GM12878 (cell line): ENCODE measurements at regions of chr3 and their contacts with region 1.

Region 1: DNA sequence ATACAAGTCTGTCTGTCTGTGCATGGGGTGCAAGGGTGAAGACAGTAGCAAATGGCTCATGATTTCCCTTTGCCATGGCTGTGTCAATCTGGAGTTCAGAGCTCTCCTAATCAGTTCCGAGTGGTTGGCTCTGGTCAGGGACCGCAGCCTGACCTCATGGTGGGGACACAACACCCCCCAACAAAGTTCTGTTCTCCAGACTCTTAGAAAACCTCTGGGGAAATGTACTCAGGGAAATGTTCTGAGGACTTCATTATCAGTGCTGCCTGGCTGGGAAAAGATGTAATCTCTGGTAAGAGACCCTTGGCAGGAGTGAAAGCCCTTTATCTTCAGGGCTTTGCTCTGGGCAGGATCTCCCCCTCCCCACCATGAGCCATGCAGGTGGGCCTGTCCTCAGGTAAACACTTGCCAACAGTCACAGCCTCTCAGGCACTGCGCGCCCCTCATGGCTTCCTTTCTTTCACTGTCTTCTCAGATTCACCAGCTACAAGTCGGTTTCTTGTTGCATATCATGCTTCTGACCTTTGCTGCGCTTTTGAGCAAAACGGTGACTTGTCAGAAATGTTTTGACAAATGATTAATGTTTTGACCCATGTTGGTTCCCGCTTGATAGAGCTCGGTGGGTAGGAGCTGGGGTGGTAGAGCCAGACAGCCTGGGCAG is 95.5 kb downstream of the ST6GAL1 start:
- DNase-seq: peak; percentile 71
- ATAC-seq: peak; percentile 52
- H3K4me3 ChIP-seq: peak overlapping the region; percentile 76
- H3K27ac ChIP-seq: peak overlapping the region; percentile 92
- H3K4me1 ChIP-seq: peaks cover 29% of the 10 kb centered on the region
- H3K27me3 ChIP-seq: no peaks in the 10 kb centered on the region
- CTCF ChIP-seq: no peak
- EP300 ChIP-seq: no peak
- POLR2A ChIP-seq: peak; percentile 60
- RAD21 ChIP-seq: no peak

Region 2: GRCh38 chr3:186520957-186521842 is 504.6 kb before region 1 on chr3:
- CTCF ChIA-PET with region 1: no interaction called
- POLR2A ChIA-PET with region 1: no interaction called
- RAD21 ChIA-PET with region 1: no interaction called
- SMC1A ChIA-PET with region 1: no interaction called
- in situ Hi-C with region 1: no loop called
- intact Hi-C with region 1: loop called (anchors 10 kb)
- DNase-seq: peak; percentile 80
- ATAC-seq: peak; percentile 71
- H3K4me3 ChIP-seq: no peak overlapping the region
- H3K27ac ChIP-seq: peak overlapping the region; percentile 78
- H3K4me1 ChIP-seq: peaks cover 54% of the 10 kb centered on the region
- H3K27me3 ChIP-seq: no peaks in the 10 kb centered on the region
- CTCF ChIP-seq: no peak
- EP300 ChIP-seq: no peak
- POLR2A ChIP-seq: no peak
- RAD21 ChIP-seq: no peak

Region 3: DNA sequence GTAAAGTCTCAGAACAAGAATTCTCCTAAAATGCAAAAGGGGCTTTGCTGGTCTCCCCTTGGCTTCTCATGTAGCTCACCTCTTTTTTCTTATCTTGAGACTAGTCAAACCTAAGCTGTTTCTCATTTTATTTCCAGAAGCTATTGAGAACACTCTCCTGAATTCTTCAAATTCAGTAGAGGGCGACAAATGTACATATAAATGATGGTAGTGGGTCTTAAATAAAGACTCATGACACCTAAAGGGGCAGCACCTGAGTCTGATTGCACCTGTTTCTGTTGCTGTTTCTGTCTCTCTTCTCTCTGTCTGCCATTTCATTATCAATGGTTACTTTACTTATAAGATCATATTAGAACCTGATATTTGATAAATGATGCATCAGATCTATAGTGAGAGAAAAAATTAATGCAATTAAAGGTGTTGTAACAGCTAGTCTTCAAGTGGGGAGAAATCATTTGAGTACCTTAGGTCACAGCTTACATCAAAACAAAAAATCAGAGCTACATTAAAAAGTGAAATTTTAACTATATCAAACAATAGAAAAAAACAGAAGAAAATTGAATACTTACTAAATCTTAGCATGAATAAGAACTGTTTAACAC is 176.3 kb before region 1 on chr3:
- CTCF ChIA-PET with region 1: interaction called, 11 read pairs
- POLR2A ChIA-PET with region 1: no interaction called
- RAD21 ChIA-PET with region 1: interaction called, 13 read pairs
- SMC1A ChIA-PET with region 1: interaction called, 21 read pairs
- in situ Hi-C with region 1: no loop called
- intact Hi-C with region 1: loop called (anchors 5 kb)
- DNase-seq: peak; percentile 30
- ATAC-seq: peak; percentile 97
- H3K4me3 ChIP-seq: no peak overlapping the region
- H3K27ac ChIP-seq: no peak overlapping the region
- H3K4me1 ChIP-seq: no peaks in the 10 kb centered on the region
- H3K27me3 ChIP-seq: peaks cover 0 to 7% of the 10 kb centered on the region in 2 experiments; a peak in 3 of 4 replicates
- CTCF ChIP-seq: peak; percentile 41 to 72 (median 56); a peak in 5 of 6 replicates
- EP300 ChIP-seq: no peak
- POLR2A ChIP-seq: no peak
- RAD21 ChIP-seq: peak; percentile 84

Region 4: DNA sequence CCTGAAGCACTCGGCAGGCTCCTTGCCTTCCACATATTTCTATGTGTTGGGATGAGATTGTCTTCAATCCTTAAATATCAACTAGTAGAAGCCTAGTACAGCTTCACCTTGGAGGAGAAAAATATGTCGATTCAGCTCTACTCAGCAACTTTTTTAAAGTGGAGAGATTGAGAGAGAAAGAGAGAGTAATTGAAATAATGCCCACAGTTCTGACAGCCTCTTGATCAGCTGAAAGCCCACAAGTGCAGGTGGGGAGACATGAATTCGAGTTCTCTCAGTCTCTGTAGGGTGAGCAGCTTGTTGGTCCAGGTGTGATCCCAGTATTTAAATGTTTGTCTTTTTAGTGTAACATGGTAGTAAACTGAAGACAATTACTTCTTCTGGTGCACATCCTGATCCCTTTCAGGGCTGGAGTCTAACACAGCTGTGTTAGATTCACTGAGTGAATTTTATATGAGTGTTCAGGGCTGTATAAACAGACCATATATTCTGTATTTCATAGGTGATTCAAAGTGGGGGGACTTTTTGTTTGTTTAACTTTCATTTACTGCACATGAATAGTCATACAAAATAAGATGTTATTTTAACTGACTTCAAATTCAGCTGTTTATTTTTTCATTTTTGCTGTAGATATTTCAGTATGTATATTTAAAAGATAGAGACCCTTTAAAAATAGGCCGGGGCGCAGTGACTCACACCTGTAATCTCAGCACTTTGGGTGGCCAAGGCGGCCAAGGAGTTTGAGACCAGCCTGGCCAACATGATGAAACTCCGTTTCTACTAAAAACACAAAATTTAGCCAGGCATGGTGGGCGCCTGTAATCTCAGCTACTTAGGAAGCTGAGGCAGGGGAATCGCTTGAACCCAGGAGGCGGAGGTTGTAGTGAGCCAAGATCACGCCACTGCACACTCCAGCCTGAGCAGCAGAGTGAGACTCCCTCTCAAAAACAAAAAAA is 31.5 kb before region 1 on chr3:
- CTCF ChIA-PET with region 1: interaction called, 10 read pairs
- POLR2A ChIA-PET with region 1: interaction called, 137 read pairs
- RAD21 ChIA-PET with region 1: interaction called, 183 read pairs
- SMC1A ChIA-PET with region 1: interaction called, 56 read pairs
- in situ Hi-C with region 1: no loop called
- intact Hi-C with region 1: loop called (anchors 5 kb)
- DNase-seq: no peak
- ATAC-seq: no peak; the same call in 2 of the 3 replicates
- H3K4me3 ChIP-seq: no peak overlapping the region
- H3K27ac ChIP-seq: peak overlapping the region; percentile 75
- H3K4me1 ChIP-seq: peaks cover 62% of the 10 kb centered on the region
- H3K27me3 ChIP-seq: no peaks in the 10 kb centered on the region
- CTCF ChIP-seq: no peak
- EP300 ChIP-seq: no peak
- POLR2A ChIP-seq: no peak
- RAD21 ChIP-seq: no peak

Region 5: GRCh38 chr3:187066228-187066995 is 40.6 kb after region 1 on chr3:
- CTCF ChIA-PET with region 1: interaction called, 19 read pairs
- POLR2A ChIA-PET with region 1: interaction called, 13 read pairs
- RAD21 ChIA-PET with region 1: interaction called, 37 read pairs
- SMC1A ChIA-PET with region 1: interaction called, 18 read pairs
- in situ Hi-C with region 1: no loop called
- intact Hi-C with region 1: loop called (anchors 2 kb)
- DNase-seq: no peak
- ATAC-seq: peak; percentile 67
- H3K4me3 ChIP-seq: no peak overlapping the region
- H3K27ac ChIP-seq: peak overlapping the region; percentile 82
- H3K4me1 ChIP-seq: peaks cover 41% of the 10 kb centered on the region
- H3K27me3 ChIP-seq: no peaks in the 10 kb centered on the region
- CTCF ChIP-seq: peak; percentile 34 to 71 (median 48); a peak in 5 of 6 replicates
- EP300 ChIP-seq: no peak
- POLR2A ChIP-seq: peak; percentile 22; the same call in 1 of the 2 replicates
- RAD21 ChIP-seq: peak; percentile 71